Activated T-helper 1 cell treated with anti-CD3 and anti-CD28 coated beads, Interleukin-12 subunit alpha, Interleukin-12 subunit beta, Interleukin-2, Interleukin-4 antibody, amounts not matched to agents 30 ng/mL and 10 ng/mL and 1 ng/mL, durations not matched to agents 14 hours and 24 hours and 36 hours (primary cell): ENCODE measurements at regions of chr18 and their contacts with region 1.

Region 1: DNA sequence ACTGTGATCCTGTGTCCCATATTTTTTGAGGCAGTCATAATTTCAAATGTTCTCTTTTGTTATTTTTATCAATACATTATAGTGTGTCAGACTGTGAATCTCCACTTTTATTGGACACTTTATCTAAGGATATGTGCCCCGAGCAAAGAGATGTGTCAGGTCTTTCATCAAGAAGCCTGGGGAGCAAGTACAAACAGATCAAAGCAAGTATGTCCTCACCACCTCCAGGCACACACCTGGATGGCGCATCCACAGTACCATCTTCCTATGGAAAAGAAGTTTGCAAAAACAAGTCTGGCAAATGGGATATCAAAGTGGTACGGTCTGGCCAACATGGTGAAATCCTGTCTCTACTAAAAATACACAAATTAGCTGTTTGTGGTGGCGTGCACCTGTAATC is 81.0 kb upstream of the ZNF236 start:
- DNase-seq: no peak
- H3K4me3 Mint-ChIP-seq: no peak overlapping the region
- H3K27ac Mint-ChIP-seq: no peak overlapping the region
- H3K4me1 Mint-ChIP-seq: peaks cover 24% of the 10 kb centered on the region
- H3K27me3 Mint-ChIP-seq: peaks cover 41% of the 10 kb centered on the region

Region 2: GRCh38 chr18:76709659-76710645 is 31.4 kb before region 1 on chr18:
- intact Hi-C with region 1: no loop called
- DNase-seq: peak; percentile 49
- H3K4me3 Mint-ChIP-seq: no peak overlapping the region
- H3K27ac Mint-ChIP-seq: no peak overlapping the region
- H3K4me1 Mint-ChIP-seq: peaks cover 19% of the 10 kb centered on the region
- H3K27me3 Mint-ChIP-seq: peaks cover 11% of the 10 kb centered on the region

Region 3: DNA sequence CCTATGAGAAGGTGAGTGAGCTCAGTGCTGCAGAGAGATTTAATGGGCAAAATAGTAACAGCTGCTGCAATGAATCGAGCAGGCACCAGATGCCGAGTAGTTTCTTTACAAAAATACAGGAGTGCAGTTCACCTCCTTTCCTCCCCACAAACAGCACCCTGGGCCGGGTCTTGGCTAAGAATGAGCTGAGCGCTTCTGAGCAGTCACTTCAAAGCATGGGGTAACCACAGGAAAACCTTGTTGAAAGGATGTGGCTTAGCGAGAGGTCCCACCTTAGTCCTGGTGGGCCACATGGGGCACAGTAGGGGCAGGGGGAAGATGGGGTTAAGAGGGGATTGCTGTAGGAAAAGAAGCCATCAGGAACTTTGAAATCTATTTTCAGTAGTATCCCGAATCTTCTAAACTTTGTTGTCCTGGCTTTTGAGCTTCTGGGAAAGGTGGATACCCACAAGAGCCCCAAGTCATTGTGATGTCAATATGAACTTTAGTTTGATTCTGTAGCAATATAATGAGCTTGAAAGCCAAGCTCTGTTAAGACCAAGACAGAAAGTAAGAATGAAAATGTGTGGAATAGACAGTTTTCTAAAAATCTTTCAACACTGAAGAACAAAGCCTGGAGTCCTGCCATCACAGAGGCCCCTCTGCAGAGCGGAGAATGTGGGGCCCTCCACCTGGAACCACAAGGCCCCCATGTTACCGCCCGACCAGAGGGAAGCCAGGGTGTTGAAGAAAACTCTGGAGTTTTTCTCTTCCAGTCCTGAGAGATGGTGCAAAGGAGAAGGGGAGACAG is 20.0 kb before region 1 on chr18:
- intact Hi-C with region 1: loop called (anchors 1 kb)
- DNase-seq: peak; percentile 83
- H3K4me3 Mint-ChIP-seq: peak overlapping the region; percentile 73
- H3K27ac Mint-ChIP-seq: peak overlapping the region; percentile 84
- H3K4me1 Mint-ChIP-seq: peaks cover 71% of the 10 kb centered on the region
- H3K27me3 Mint-ChIP-seq: no peaks in the 10 kb centered on the region